Cardiac septum (tissue), 1 donor: ENCODE measurements at regions of chr14 and their contacts with region 1.

Region 1: GRCh38 chr14:20343092-20343861 is at the start of gene PARP2:
- DNase-seq: peak; percentile 97
- total RNA-seq, gene PARP2: 15.2 TPM

Region 2: DNA sequence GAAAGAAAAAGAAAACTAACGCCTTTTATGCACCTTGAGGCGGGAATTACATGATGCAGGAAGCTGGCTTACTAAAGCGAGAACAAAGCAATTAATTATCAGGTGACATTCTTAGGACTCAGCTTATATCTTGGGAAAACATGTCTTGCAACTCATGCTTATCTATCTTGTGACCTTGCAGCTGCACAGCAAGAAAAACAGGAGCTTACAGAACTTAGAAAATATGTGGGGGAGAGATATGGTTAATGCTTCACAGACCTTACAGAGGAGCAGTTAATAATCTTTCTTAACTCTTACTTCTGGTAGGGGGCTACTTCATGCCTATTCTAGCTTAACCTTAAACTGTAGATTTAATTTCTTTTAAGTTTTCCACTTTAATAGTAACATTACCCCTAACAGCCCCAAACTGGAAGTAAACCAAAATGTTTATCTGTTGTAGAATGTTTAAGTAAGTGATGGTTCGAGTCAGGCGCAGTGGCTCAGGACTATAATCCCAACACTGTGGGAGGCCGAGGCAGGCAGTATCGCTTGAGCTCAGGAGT is 165.8 kb before region 1 on chr14:
- intact Hi-C with region 1: no loop called
- DNase-seq: no peak

Region 3: GRCh38 chr14:20327005-20327869 is 16.0 kb before region 1 on chr14:
- intact Hi-C with region 1: loop called (anchors 2 kb)
- DNase-seq: no peak

Region 4: GRCh38 chr14:20413045-20413799 is 69.9 kb after region 1 on chr14 and contains the start of gene TEP1:
- intact Hi-C with region 1: loop called (anchors 2 kb)
- DNase-seq: peak; percentile 95
- total RNA-seq, gene TEP1: 15.7 TPM

Region 5: GRCh38 chr14:20461274-20462001 is 118.2 kb after region 1 on chr14 and contains the start of gene PIP4P1:
- intact Hi-C with region 1: loop called (anchors 5 kb)
- DNase-seq: peak; percentile 100
- total RNA-seq, gene PIP4P1: 18.2 TPM